Activated T-helper 2 cell treated with anti-CD3 and anti-CD28 coated beads, Interferon-gamma antibody, Interleukin-2, Interleukin-4, amounts not matched to agents 10 μg/mL and 5 μg/mL and 100 μg/mL, durations not matched to agents 14 hours and 24 hours and 36 hours (primary cell): ENCODE measurements at regions of chr16 and their contacts with region 1.

Region 1: GRCh38 chr16:50747207-50747956 is 5.5 kb downstream of the CYLD start:
- DNase-seq: peak; percentile 21
- H3K4me3 Mint-ChIP-seq: peak overlapping the region; percentile 81
- H3K27ac Mint-ChIP-seq: peak overlapping the region; percentile 95
- H3K4me1 Mint-ChIP-seq: peaks cover 56% of the 10 kb centered on the region
- H3K27me3 Mint-ChIP-seq: no peaks in the 10 kb centered on the region

Region 2: GRCh38 chr16:50266337-50267091 is 480.9 kb before region 1 on chr16 and contains the start of gene ADCY7:
- intact Hi-C with region 1: loop called (anchors 5 kb)
- DNase-seq: peak; percentile 77
- H3K4me3 Mint-ChIP-seq: peak within 1 kb of the TSS; percentile 91
- H3K27ac Mint-ChIP-seq: peak within 1 kb of the TSS; percentile 92
- H3K4me1 Mint-ChIP-seq: peaks cover 47% of the 10 kb centered on the region
- H3K27me3 Mint-ChIP-seq: no peaks in the 10 kb centered on the region
- total RNA-seq, gene ADCY7: 78.7 and 89.5 TPM in 2 replicates

Region 3: DNA sequence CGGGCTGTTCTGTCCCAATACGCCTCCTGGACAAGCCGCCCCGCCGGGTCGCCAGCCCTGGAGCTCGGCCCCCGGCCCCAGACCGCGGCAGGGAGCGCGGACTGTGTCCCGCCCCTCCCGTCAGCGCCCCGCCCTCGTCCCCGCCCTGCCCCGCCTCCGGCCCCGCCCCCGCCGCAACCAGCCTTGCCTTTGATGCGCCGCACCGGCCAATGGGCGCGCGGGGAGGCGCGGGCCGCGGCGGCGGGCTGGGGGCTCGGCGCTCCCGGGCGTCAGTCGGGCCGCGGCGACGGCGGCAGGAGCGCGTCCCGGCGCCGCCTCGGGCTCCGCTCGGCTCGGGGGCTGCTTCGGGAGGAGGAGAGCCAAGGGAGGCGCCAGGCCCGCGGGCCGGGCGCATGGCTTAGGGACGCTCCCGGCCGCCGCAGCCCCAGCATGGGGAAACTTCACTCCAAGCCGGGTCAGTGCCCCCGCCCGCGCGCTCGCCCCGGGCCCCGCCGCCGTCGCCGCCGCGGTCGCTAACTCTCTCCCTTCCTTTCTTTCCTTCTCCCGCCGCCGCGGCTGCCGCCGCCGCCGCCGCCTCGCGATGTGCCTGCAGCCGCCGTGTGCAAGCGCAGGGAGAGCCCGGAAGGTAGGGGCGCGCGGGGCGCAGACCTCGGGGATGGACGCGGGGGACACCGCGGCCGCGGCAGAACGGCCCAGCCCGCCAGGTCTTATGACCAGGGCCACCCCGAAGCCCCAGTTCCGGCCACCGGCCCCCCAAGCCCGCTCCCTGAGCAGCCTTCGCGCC is 199.1 kb before region 1 on chr16 and contains the start of gene NKD1:
- intact Hi-C with region 1: loop called (anchors 5 kb)
- DNase-seq: peak; percentile 59
- H3K4me3 Mint-ChIP-seq: peak within 1 kb of the TSS; percentile 90
- H3K27ac Mint-ChIP-seq: peak within 1 kb of the TSS; percentile 28
- H3K4me1 Mint-ChIP-seq: peaks cover 4% of the 10 kb centered on the region
- H3K27me3 Mint-ChIP-seq: peaks cover 67% of the 10 kb centered on the region
- total RNA-seq, gene NKD1: 0.96 and 1.8 TPM in 2 replicates

Region 4: DNA sequence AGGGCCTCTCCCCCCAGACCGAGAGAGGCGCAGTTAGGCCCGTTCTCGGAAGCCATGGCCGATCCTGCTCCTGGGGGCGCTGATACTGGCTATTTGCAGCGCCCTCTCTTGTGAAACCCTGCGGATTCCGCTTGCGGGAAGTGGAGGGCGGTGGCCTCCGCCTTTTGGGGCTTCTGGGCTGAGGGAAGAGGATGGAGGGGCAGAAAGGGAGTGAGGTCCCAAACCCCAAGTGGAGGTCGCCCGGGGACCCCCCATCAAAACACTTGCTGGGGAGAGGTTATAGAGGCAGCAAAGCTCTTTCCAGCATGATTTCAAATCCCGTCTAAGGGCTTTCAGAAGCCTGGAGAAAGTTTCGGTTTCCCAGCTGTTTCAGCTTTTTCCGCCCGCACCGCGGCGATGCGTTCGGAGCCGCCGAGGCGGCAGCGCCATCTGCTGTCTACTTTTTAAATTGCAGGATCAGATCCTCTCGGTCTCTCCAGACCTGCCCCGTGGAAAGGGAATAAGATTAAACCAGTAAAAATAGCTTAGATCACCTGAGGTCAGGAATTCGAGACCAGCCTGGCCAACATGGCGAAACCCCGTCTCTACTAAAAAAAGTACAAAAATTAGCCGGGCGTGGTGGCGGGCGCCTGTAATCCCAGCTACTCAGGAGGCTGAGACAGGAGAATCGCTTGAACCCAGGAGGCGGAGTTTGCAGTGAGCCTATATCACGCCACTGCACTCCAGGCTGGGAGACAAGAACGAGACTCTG is 82.1 kb before region 1 on chr16:
- intact Hi-C with region 1: loop called (anchors 1 kb)
- DNase-seq: peak; percentile 74
- H3K4me3 Mint-ChIP-seq: peak overlapping the region; percentile 55
- H3K27ac Mint-ChIP-seq: peak overlapping the region; percentile 17
- H3K4me1 Mint-ChIP-seq: peaks cover 34% of the 10 kb centered on the region
- H3K27me3 Mint-ChIP-seq: no peaks in the 10 kb centered on the region

Region 5: DNA sequence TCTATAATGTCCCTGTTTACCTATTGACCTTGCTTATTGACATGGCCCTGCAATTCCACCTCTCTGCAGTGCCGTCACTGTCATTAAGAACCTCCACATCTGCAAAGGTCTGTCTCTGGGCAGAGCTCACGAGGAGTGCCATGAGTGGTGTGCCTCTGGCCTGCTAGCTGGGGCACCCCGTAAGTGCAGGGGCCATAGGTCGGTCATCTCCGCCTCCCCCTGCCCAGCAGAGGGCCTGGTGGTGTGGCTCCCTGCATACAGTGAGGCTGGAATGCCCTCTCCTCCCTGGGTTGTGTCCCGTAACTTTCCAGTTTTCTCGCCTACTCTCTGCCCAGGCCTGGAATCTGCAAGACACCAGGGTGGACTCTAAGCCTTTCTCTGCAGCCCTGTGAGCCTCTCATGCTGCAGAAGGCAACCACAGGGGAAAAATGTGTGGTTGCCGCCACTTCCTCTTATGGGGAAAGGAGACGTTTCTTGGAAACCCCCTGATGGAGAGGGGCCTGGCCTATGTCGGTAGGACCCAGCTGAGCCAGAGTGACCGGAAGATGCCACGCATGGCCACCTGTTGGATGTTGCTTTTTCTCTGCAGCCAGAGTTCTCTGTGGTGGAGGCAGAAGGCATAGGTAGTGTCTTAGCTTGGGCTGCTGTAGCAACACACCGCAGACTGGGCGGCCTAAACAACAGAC is 63.5 kb before region 1 on chr16:
- intact Hi-C with region 1: loop called (anchors 1 kb)
- DNase-seq: peak; percentile 61
- H3K4me3 Mint-ChIP-seq: peak overlapping the region; percentile 45
- H3K27ac Mint-ChIP-seq: peak overlapping the region; percentile 86
- H3K4me1 Mint-ChIP-seq: peaks cover 58% of the 10 kb centered on the region
- H3K27me3 Mint-ChIP-seq: no peaks in the 10 kb centered on the region

Region 6: GRCh38 chr16:50709053-50709684 is 38.2 kb before region 1 on chr16:
- intact Hi-C with region 1: loop called (anchors 1 kb)
- DNase-seq: no peak
- H3K4me3 Mint-ChIP-seq: peak overlapping the region; percentile 11
- H3K27ac Mint-ChIP-seq: peak overlapping the region; percentile 64
- H3K4me1 Mint-ChIP-seq: peaks cover 54% of the 10 kb centered on the region
- H3K27me3 Mint-ChIP-seq: no peaks in the 10 kb centered on the region

Region 7: GRCh38 chr16:50781043-50781442 is 33.7 kb after region 1 on chr16:
- intact Hi-C with region 1: loop called (anchors 2 kb)
- DNase-seq: no peak
- H3K4me3 Mint-ChIP-seq: peak overlapping the region; percentile 27
- H3K27ac Mint-ChIP-seq: peak overlapping the region; percentile 84
- H3K4me1 Mint-ChIP-seq: peaks cover 46% of the 10 kb centered on the region
- H3K27me3 Mint-ChIP-seq: no peaks in the 10 kb centered on the region